B cell (primary cell): ENCODE measurements at regions of chr13 and their contacts with region 1.

Region 1: GRCh38 chr13:33817901-33818706 is at the start of gene RFC3:
- DNase-seq: peak; percentile 94
- ATAC-seq: peak; percentile 84
- H3K4me3 ChIP-seq: peak within 1 kb of the TSS; percentile 83 to 97 (median 94)
- H3K4me3 Mint-ChIP-seq: peak within 1 kb of the TSS; percentile 94
- H3K27ac ChIP-seq: peak within 1 kb of the TSS; percentile 50 to 63
- H3K27ac Mint-ChIP-seq: peak within 1 kb of the TSS; percentile 90
- H3K4me1 ChIP-seq: peaks cover 3 to 13% of the 10 kb centered on the region in 2 donors
- H3K4me1 Mint-ChIP-seq: peaks cover 18% of the 10 kb centered on the region
- H3K27me3 ChIP-seq: no peaks in the 10 kb centered on the region
- H3K27me3 Mint-ChIP-seq: no peaks in the 10 kb centered on the region
- CTCF ChIP-seq: no peak
- total RNA-seq, gene RFC3: 9.2 and 9.4 TPM in 2 replicates

Region 2: GRCh38 chr13:33891196-33891742 is 73.2 kb after region 1 on chr13:
- CTCF ChIA-PET with region 1: no interaction called
- POLR2A ChIA-PET with region 1: no interaction called
- intact Hi-C with region 1: no loop called
- DNase-seq: no peak
- ATAC-seq: no peak
- H3K4me3 ChIP-seq: no peak overlapping the region
- H3K4me3 Mint-ChIP-seq: no peak overlapping the region
- H3K27ac ChIP-seq: no peak overlapping the region
- H3K27ac Mint-ChIP-seq: no peak overlapping the region
- H3K4me1 ChIP-seq: no peaks in the 10 kb centered on the region
- H3K4me1 Mint-ChIP-seq: no peaks in the 10 kb centered on the region
- H3K27me3 ChIP-seq: no peaks in the 10 kb centered on the region
- H3K27me3 Mint-ChIP-seq: no peaks in the 10 kb centered on the region
- CTCF ChIP-seq: no peak

Region 3: DNA sequence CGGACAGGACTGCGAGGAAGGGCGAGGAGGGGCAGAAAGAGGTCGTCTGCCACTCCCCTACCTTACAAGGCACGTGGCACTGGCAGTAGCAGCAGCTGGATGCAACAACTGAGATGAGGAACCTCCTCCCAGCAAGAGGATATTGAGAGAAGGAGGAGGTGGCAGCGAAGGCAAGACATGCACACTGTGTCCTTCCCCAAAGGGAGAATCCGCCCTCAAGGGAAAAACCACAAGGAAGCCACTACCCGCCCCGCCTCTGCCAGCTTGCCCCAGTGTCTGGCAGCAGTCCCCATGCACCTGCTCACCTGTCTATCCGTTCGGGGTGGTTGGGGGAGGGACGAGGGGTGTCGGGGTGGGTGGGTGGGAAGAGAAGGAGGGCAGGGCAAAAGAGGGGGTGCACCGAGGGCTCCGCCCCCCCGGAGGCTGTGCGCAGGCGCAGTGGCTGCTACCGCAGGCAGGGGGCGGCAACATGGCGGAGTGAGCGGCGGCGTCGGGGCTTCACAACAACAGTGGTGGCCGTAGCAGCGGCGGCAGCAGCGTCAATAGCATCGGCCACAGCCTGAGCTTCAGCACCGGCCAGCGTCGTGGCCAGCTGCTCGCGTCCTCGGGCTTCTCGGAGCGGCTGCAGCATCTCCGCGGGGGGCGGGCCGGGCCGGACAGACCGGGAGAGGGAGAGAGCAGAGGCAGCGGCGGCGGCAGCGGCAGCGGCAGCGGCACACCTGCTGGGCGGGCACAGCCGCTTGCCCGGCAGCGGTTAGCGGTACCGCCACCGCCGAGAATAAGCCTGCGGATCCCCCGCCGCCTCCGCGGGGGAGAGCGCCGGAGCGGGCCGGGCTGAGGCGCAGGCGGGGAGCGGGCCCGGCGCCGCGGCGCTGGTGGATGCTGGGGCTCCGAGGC is 1124.0 kb after region 1 on chr13 and contains the start of gene NBEA:
- CTCF ChIA-PET with region 1: no interaction called
- POLR2A ChIA-PET with region 1: no interaction called
- intact Hi-C with region 1: loop called (anchors 10 kb)
- DNase-seq: peak; percentile 89
- ATAC-seq: peak; percentile 80
- H3K4me3 ChIP-seq: peak within 1 kb of the TSS; percentile 39 to 81 (median 71)
- H3K4me3 Mint-ChIP-seq: peak within 1 kb of the TSS; percentile 95
- H3K27ac ChIP-seq: peak within 1 kb of the TSS in 1 of 2 donors; percentile 65
- H3K27ac Mint-ChIP-seq: peak within 1 kb of the TSS; percentile 88
- H3K4me1 ChIP-seq: peaks cover 20 to 25% of the 10 kb centered on the region in 2 donors
- H3K4me1 Mint-ChIP-seq: peaks cover 30% of the 10 kb centered on the region
- H3K27me3 ChIP-seq: peaks cover 0 to 8% (median 6%) of the 10 kb centered on the region in 4 experiments
- H3K27me3 Mint-ChIP-seq: peaks cover 24% of the 10 kb centered on the region
- CTCF ChIP-seq: peak; percentile 19
- total RNA-seq, gene NBEA: 10.3 and 10.7 TPM in 2 replicates